Activated CD8-positive, alpha-beta T cell treated with anti-CD3 and anti-CD28 coated beads, Interleukin-2, amount 10 ng/mL, durations not matched to agents 7 days and 5 days (primary cell): ENCODE measurements at regions of chr6 and their contacts with region 1.

Region 1: GRCh38 chr6:149211046-149211571 is 106.4 kb upstream of the TAB2 start:
- DNase-seq: peak; percentile 44
- ATAC-seq: peak; percentile 69
- H3K4me3 Mint-ChIP-seq: peak overlapping the region; percentile 42
- H3K27ac Mint-ChIP-seq: peak overlapping the region; percentile 82
- H3K4me1 Mint-ChIP-seq: peaks cover 5% of the 10 kb centered on the region
- H3K27me3 Mint-ChIP-seq: no peaks in the 10 kb centered on the region

Region 2: DNA sequence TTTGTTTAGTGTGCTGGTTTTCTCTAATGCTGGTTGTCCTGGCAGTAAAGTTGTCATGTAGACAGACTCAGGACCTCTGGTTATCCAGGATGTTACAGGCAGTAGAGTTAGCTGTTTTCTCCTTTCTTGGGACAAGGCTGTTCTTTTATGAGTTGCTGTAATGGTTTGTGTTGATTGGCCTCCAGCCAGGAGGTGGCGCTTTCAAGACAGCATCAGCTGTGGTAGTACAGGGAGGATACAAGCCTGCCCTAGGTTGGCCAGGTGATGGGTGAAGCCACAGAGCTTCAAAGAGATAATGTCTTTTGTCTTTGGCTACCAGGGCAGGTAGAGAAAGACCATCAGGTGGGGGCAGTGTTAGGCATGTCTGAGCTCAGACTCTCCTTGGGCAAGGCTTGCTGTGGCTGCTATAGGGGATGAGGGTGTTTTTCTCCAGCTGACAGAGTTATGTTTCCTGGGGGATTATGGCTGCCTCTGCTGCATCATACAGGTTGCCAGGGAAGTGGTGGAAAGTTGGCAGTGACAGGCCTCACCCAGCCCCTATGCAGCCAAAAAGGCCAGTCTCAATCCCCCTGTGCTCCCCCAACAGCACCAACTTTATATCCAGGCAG is 20.8 kb before region 1 on chr6:
- CTCF ChIA-PET with region 1: interaction called, 11 read pairs
- POLR2A ChIA-PET with region 1: no interaction called
- DNase-seq: peak; percentile 53
- ATAC-seq: no peak
- H3K4me3 Mint-ChIP-seq: no peak overlapping the region
- H3K27ac Mint-ChIP-seq: peak overlapping the region; percentile 67
- H3K4me1 Mint-ChIP-seq: peaks cover 21% of the 10 kb centered on the region
- H3K27me3 Mint-ChIP-seq: no peaks in the 10 kb centered on the region

Region 3: GRCh38 chr6:149380523-149380922 is 169.4 kb after region 1 on chr6:
- CTCF ChIA-PET with region 1: no interaction called
- POLR2A ChIA-PET with region 1: no interaction called
- DNase-seq: no peak
- ATAC-seq: no peak
- H3K4me3 Mint-ChIP-seq: no peak overlapping the region
- H3K27ac Mint-ChIP-seq: no peak overlapping the region
- H3K4me1 Mint-ChIP-seq: peaks cover 52% of the 10 kb centered on the region
- H3K27me3 Mint-ChIP-seq: no peaks in the 10 kb centered on the region